ENCODE measurements at regions of chr12 and their contacts with region 1.

Region 1: DNA sequence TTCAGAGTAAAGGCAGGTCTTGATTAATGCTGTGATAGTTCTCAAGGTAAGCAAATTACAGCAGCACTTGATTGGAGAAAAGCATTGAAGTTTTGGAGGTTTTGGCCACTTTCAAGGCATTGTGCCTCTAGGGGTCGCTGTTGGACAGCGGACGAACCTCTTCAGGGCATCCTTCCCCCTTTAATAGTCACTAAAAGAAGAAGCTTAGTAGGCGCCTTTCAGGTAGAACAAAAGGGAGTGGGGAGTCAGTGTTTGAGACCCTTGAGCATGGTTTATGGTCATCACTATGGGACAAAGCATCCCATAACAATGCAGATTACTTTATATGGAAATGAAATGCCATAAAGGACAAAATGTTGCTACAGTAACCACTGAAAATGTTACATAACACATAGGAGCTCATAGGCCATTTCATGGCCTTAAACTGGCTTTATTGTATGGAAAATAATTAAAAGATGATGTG is 199.5 kb upstream of the DCN start:
- DNase-seq: peak; percentile 83
- H3K4me3 Mint-ChIP-seq: peak overlapping the region; percentile 67
- H3K27ac Mint-ChIP-seq: peak overlapping the region; percentile 36
- H3K4me1 Mint-ChIP-seq: peaks cover 10% of the 10 kb centered on the region
- H3K27me3 Mint-ChIP-seq: peaks cover 2% of the 10 kb centered on the region

Region 2: DNA sequence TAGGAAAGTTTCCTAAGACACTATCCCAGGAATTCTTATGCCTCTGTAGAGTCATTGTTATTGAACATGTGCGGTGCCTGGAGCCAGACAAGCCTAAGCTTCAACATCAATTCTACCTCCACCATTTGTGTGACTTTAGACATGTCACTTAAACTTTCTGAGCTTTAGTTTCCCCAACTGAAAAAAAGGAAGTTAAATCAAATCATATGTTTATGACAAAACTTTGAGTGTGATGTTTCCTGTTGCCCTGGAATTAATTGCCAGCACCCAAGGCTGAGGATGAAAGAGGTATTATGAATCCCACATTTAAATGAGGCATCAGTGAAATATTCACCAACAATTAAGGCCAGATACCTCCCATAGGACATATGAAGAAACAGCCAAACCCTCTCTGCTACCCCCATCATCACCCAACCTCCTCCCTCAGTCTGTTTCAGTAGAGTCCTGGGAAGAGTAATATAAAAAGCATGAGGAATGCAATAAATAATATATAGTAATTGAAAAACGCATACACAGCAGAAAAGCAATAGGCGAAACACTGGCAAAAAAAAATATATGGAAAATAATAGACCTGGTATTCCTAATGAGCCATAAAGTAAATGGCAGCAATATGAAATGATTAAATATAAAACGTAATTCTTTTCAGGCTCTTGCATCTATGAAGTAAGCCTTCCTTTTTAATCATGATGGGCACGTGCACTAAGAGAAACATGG is 17.5 kb before region 1 on chr12:
- CTCF ChIA-PET with region 1: interaction called, 11 read pairs
- POLR2A ChIA-PET with region 1: no interaction called
- DNase-seq: no peak
- H3K4me3 Mint-ChIP-seq: no peak overlapping the region
- H3K27ac Mint-ChIP-seq: no peak overlapping the region
- H3K4me1 Mint-ChIP-seq: no peaks in the 10 kb centered on the region
- H3K27me3 Mint-ChIP-seq: no peaks in the 10 kb centered on the region

Region 3: GRCh38 chr12:91397866-91398532 is 15.9 kb after region 1 on chr12:
- CTCF ChIA-PET with region 1: interaction called, 15 read pairs
- POLR2A ChIA-PET with region 1: no interaction called
- DNase-seq: no peak
- H3K4me3 Mint-ChIP-seq: no peak overlapping the region
- H3K27ac Mint-ChIP-seq: no peak overlapping the region
- H3K4me1 Mint-ChIP-seq: peaks cover 11% of the 10 kb centered on the region
- H3K27me3 Mint-ChIP-seq: no peaks in the 10 kb centered on the region

Region 4: GRCh38 chr12:92649511-92650227 is 1267.6 kb after region 1 on chr12:
- CTCF ChIA-PET with region 1: interaction called, 11 read pairs
- POLR2A ChIA-PET with region 1: no interaction called
- DNase-seq: peak; percentile 62
- H3K4me3 Mint-ChIP-seq: no peak overlapping the region
- H3K27ac Mint-ChIP-seq: no peak overlapping the region
- H3K4me1 Mint-ChIP-seq: peaks cover 6% of the 10 kb centered on the region
- H3K27me3 Mint-ChIP-seq: peaks cover 2% of the 10 kb centered on the region

Measured in activated CD4-positive, alpha-beta memory T cell treated with anti-CD3 and anti-CD28 coated beads, Interleukin-2, amount 10 ng/mL, durations not matched to agents 7 days and 5 days (primary cell).